Naive thymus-derived CD4-positive, alpha-beta T cell (primary cell): ENCODE measurements at regions of chr16 and their contacts with region 1.

Region 1: DNA sequence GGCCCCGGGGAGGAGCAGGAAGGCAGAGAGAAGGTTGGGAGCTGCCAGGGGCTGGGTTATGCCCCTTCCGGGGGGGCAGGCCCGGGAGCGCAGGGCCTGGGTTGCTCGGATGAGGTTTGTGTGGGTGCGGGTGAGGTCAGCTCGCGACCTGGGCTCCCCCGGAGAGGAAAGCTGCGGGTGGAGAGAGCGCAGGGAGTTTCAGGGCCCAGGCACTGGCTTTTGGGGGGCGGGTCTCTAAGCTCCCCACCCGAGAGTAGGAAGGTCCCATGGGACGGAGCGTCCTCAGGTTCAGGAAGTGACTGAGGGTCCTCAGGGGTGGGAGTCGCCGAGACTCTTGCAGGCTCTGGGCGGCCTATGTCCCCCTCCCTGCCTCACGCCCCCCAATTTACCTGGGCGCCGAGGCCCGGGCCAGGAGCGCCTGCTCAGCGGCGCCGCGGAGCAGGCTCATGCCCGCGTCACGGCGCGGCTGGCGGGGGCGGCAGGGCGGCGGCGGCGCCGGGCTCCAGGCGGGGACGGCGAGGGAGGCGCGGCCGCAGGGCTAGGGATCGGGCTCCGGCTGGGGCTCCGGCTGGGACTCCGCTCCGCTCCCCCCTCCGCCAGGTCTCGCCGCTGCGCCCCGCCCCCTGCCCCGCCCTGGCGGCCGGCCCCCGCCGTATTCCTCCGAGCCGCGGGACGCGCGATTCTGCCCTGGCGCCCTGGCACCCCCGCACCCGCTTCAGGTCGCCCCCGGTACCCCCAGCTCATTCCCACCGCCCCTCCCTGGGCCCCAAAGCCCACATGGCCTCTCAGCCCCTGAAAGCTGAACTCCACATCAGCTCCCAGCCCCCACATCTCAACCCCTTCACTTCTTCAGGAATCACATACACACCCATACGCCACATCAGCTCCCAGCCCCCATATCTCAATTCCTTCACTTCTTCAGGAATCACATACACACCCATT is at the start of gene DOK4:
- DNase-seq: peak; percentile 47 to 87 (median 65)
- ATAC-seq: peak; percentile 97
- H3K4me3 ChIP-seq: peak within 1 kb of the TSS; percentile 59
- H3K4me3 Mint-ChIP-seq: peak within 1 kb of the TSS; percentile 82 to 97 (median 87)
- H3K27ac ChIP-seq: peak within 1 kb of the TSS; percentile 64
- H3K27ac Mint-ChIP-seq: peak within 1 kb of the TSS in 8 of 9 donors; percentile 36 to 86 (median 54)
- H3K4me1 ChIP-seq: peaks cover 9 to 17% of the 10 kb centered on the region in 2 donors
- H3K4me1 Mint-ChIP-seq: peaks cover 11 to 30% (median 19%) of the 10 kb centered on the region in 7 donors
- H3K27me3 ChIP-seq: no peaks in the 10 kb centered on the region
- H3K27me3 Mint-ChIP-seq: peaks cover 0 to 19% (median 0%) of the 10 kb centered on the region in 5 donors
- total RNA-seq, gene DOK4: 2.2 to 4.0 (median 2.9) TPM

Region 2: GRCh38 chr16:57284208-57284951 is 201.8 kb before region 1 on chr16 and contains the start of gene PLLP:
- CTCF ChIA-PET with region 1: no interaction called
- POLR2A ChIA-PET with region 1: no interaction called
- intact Hi-C with region 1: loop called in 1 of 2 experiments (anchors 1 kb)
- DNase-seq: peak; percentile 30 to 66 (median 51)
- ATAC-seq: peak; percentile 82
- H3K4me3 ChIP-seq: peak within 1 kb of the TSS; percentile 60
- H3K4me3 Mint-ChIP-seq: peak within 1 kb of the TSS; percentile 77 to 89 (median 84)
- H3K27ac ChIP-seq: peak within 1 kb of the TSS; percentile 59
- H3K27ac Mint-ChIP-seq: peak within 1 kb of the TSS in 8 of 9 donors; percentile 10 to 94 (median 64)
- H3K4me1 ChIP-seq: peaks cover 0 to 25% of the 10 kb centered on the region in 2 donors
- H3K4me1 Mint-ChIP-seq: peaks cover 20 to 51% (median 41%) of the 10 kb centered on the region in 7 donors
- H3K27me3 ChIP-seq: peaks cover 0 to 8% of the 10 kb centered on the region in 2 donors
- H3K27me3 Mint-ChIP-seq: peaks cover 0 to 41% (median 0%) of the 10 kb centered on the region in 5 donors
- total RNA-seq, gene PLLP: 0.36 to 8.4 (median 3.3) TPM

Region 3: GRCh38 chr16:57475711-57476339 is 10.4 kb before region 1 on chr16:
- CTCF ChIA-PET with region 1: interaction called, 3 read pairs
- POLR2A ChIA-PET with region 1: interaction called, 5 read pairs
- intact Hi-C with region 1: loop called in 1 of 2 experiments (anchors 1 kb)
- DNase-seq: peak; percentile 62 to 88 (median 74)
- ATAC-seq: peak; percentile 95
- H3K4me3 ChIP-seq: no peak overlapping the region
- H3K4me3 Mint-ChIP-seq: peak overlapping the region in 8 of 10 donors; percentile 24 to 73 (median 44)
- H3K27ac ChIP-seq: peak overlapping the region; percentile 45
- H3K27ac Mint-ChIP-seq: peak overlapping the region in 3 of 9 donors; percentile 60 to 70 (median 64)
- H3K4me1 ChIP-seq: peaks cover 7 to 8% of the 10 kb centered on the region in 2 donors
- H3K4me1 Mint-ChIP-seq: peaks cover 13 to 26% (median 17%) of the 10 kb centered on the region in 7 donors
- H3K27me3 ChIP-seq: no peaks in the 10 kb centered on the region
- H3K27me3 Mint-ChIP-seq: peaks cover 0 to 2% (median 0%) of the 10 kb centered on the region in 5 donors